ENCODE measurements at regions of chr5 and their contacts with region 1.

Region 1: GRCh38 chr5:32585446-32586275 is at the start of gene SUB1:
- H3K4me3 ChIP-seq: peak within 1 kb of the TSS; percentile 96
- H3K27ac ChIP-seq: peak within 1 kb of the TSS; percentile 94
- H3K4me1 ChIP-seq: peaks cover 13% of the 10 kb centered on the region
- CTCF ChIP-seq: peak; percentile 79

Region 2: GRCh38 chr5:32400401-32400800 is 185.3 kb before region 1 on chr5:
- CTCF ChIA-PET with region 1: interaction called, 12 read pairs
- POLR2A ChIA-PET with region 1: no interaction called
- H3K4me3 ChIP-seq: no peak overlapping the region
- H3K27ac ChIP-seq: no peak overlapping the region
- H3K4me1 ChIP-seq: no peaks in the 10 kb centered on the region
- CTCF ChIP-seq: no peak

Region 3: GRCh38 chr5:32498484-32498883 is 87.2 kb before region 1 on chr5:
- CTCF ChIA-PET with region 1: interaction called, 16 read pairs
- POLR2A ChIA-PET with region 1: interaction called, 4 read pairs
- H3K4me3 ChIP-seq: no peak overlapping the region
- H3K27ac ChIP-seq: no peak overlapping the region
- H3K4me1 ChIP-seq: no peaks in the 10 kb centered on the region; the same call in 1 of the 2 replicates
- CTCF ChIP-seq: no peak

Region 4: GRCh38 chr5:32534041-32534440 is 51.6 kb before region 1 on chr5:
- CTCF ChIA-PET with region 1: interaction called, 10 read pairs
- POLR2A ChIA-PET with region 1: interaction called, 3 read pairs
- H3K4me3 ChIP-seq: no peak overlapping the region
- H3K27ac ChIP-seq: no peak overlapping the region
- H3K4me1 ChIP-seq: peaks cover 8% of the 10 kb centered on the region
- CTCF ChIP-seq: no peak

Region 5: DNA sequence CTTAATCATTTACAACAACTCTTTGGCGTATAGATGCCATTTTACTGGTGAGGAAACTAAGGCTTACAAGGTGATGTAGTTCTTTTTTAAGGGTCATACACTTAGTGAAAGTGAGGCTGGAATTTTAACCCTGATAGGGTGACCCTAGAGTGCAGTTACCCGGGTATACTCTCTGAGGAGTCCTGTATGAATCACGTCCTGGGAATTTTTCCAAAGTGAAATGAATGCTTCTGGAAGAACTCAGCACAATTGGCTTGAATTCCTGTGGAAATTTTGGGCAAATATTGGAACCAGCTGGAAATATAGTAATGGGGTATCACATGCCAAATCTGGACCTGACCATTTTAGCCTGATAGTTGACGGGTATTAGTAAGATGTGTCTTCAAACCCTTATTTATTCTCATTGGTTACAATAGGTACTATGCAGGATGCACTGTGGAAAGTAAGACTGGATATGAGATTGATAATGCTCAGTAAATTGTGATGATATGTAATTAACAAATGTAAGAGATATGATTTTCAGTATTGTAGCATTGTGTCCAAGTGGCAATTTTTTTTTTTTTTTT is 14.5 kb after region 1 on chr5:
- CTCF ChIA-PET with region 1: interaction called, 29 read pairs
- POLR2A ChIA-PET with region 1: no interaction called
- H3K4me3 ChIP-seq: no peak overlapping the region
- H3K27ac ChIP-seq: no peak overlapping the region
- H3K4me1 ChIP-seq: no peaks in the 10 kb centered on the region
- CTCF ChIP-seq: no peak

Region 6: GRCh38 chr5:32679218-32679617 is 93.6 kb after region 1 on chr5:
- CTCF ChIA-PET with region 1: no interaction called
- POLR2A ChIA-PET with region 1: no interaction called
- H3K4me3 ChIP-seq: no peak overlapping the region
- H3K27ac ChIP-seq: no peak overlapping the region
- H3K4me1 ChIP-seq: no peaks in the 10 kb centered on the region
- CTCF ChIP-seq: no peak

Region 7: DNA sequence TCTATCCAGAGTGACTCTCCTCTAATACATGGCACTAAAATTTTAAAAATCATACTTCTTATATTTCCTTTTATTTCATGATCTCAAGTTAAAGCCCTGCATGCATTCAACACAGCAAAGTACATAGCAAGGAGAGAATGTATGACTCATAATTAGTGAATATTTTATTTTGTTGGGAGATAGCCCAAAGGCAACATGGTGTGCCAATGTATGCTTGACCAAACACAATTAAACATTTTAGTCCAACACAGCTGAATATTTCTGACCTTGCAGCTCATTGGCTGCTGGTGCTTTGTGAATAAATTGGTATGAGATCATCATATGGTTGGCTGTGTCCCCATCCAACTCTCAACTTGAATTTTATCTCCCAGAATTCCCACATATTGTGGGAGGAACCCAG is 229.0 kb after region 1 on chr5:
- CTCF ChIA-PET with region 1: no interaction called
- POLR2A ChIA-PET with region 1: no interaction called
- H3K4me3 ChIP-seq: no peak overlapping the region
- H3K27ac ChIP-seq: no peak overlapping the region
- H3K4me1 ChIP-seq: no peaks in the 10 kb centered on the region
- CTCF ChIP-seq: no peak

Region 8: GRCh38 chr5:33120671-33121070 is 535.0 kb after region 1 on chr5:
- CTCF ChIA-PET with region 1: no interaction called
- POLR2A ChIA-PET with region 1: no interaction called
- H3K4me3 ChIP-seq: no peak overlapping the region
- H3K27ac ChIP-seq: no peak overlapping the region
- H3K4me1 ChIP-seq: no peaks in the 10 kb centered on the region
- CTCF ChIP-seq: no peak

Measured in HEK293 (cell line).